ENCODE measurements at regions of chr6 and their contacts with region 1.

Region 1: DNA sequence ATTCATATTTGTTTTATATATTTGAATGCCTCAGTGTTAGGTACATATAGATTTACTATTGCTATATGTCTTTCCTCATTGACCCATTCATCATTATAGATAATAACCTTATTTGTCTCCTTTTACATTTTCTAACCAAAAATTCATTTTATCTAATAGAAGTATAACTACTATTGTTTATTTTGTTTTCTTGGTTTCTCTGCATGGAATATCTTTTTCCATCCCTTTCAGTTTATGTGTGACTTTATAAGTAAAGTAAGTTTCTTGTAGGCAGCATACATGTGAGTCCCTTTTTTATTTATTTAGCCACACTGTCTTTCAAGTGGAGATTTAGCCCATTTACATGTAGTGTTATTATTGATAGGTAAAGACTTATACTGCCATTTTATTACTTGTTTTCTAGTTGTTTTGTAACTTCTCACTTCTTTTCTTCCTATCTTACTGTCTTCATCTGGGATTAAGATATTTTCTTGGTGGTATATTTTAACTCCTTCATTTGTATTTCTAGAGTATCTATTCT is 572.0 kb upstream of the MAN1A1 start:
- DNase-seq: no peak

Region 2: DNA sequence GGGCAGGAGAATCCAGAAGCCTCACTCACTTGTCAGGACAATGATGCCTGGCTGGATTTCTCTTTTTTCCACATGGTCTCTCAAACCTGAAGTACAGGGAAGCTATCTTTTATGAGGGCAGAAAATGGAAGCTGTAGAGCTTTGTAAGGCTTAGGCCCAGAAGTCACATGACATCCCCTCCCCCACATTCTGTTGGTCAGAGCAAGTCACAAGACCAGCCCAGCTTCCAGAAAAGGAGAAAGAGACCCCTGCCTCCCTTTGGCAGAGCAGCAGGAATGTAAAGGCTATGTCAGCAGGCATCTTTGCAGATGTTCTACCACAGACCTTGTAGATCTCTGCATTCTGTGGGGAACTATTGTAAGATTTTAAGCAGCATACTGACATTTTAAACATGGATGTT is 1769.0 kb before region 1 on chr6:
- intact Hi-C with region 1: loop called in 1 of 2 experiments (anchors 5 kb)
- DNase-seq: no peak